ENCODE measurements at regions of chr2 and their contacts with region 1.

Region 1: GRCh38 chr2:131492418-131493198 is 411 bp upstream of the MZT2A start:
- DNase-seq: peak; percentile 95
- H3K4me3 Mint-ChIP-seq: peak overlapping the region; percentile 97
- H3K27ac Mint-ChIP-seq: peak overlapping the region; percentile 96
- H3K4me1 Mint-ChIP-seq: peaks cover 57% of the 10 kb centered on the region
- H3K27me3 Mint-ChIP-seq: no peaks in the 10 kb centered on the region

Region 2: DNA sequence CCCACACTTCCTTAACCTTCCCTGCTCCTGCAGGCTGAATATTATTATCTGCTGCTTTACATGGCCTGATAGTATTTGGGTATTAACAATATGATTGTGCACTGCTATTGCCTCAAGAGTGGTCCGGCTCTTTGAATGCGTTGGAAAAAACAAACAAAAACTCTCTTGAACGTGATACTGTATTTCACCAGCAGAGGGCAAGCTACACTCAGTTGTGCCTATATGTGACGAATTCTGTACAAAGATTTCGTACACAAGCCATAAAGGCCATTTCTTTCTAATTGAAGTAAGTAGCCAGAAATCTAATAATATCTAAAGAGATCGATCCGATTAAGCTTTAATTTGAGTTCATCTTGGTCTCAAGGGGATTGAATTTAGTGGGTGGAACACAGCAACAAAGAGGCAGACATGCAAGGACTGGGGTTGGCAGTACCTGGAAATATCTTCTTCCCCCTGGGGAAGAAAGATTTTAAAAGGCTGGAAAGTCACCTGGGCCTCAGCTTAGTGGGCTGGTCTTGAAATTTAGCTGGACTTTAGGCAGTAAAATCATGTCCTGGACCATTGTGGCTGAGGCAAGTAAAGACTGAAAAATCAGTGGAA is 79.4 kb before region 1 on chr2:
- CTCF ChIA-PET with region 1: interaction called, 15 read pairs
- POLR2A ChIA-PET with region 1: interaction called, 3 read pairs
- DNase-seq: no peak
- H3K4me3 Mint-ChIP-seq: no peak overlapping the region
- H3K27ac Mint-ChIP-seq: no peak overlapping the region
- H3K4me1 Mint-ChIP-seq: peaks cover 5% of the 10 kb centered on the region
- H3K27me3 Mint-ChIP-seq: peaks cover 51% of the 10 kb centered on the region

Region 3: DNA sequence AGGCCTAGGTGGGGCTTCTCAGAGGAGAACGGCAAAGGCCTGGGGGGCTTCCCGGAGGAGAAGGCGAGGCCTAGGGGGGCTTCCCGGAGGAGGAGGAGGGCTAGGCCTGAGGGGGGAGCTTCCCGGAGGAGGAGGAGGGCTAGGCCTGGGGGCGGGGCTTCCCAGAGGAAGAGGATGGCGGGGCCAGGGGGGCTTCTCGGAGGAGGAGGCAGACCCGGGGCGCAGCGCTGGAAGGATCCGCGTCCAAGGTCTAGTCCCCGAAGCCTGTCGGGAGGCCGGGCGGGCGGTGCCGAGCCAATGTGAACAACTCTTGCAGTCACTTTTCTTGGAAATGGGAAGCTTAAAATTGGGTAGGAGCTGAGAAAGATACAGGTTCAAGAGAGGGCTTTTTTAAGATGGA is 46.7 kb before region 1 on chr2:
- CTCF ChIA-PET with region 1: no interaction called
- POLR2A ChIA-PET with region 1: no interaction called
- DNase-seq: no peak
- H3K4me3 Mint-ChIP-seq: no peak overlapping the region
- H3K27ac Mint-ChIP-seq: no peak overlapping the region
- H3K4me1 Mint-ChIP-seq: peaks cover 3% of the 10 kb centered on the region
- H3K27me3 Mint-ChIP-seq: peaks cover 16% of the 10 kb centered on the region

Region 4: DNA sequence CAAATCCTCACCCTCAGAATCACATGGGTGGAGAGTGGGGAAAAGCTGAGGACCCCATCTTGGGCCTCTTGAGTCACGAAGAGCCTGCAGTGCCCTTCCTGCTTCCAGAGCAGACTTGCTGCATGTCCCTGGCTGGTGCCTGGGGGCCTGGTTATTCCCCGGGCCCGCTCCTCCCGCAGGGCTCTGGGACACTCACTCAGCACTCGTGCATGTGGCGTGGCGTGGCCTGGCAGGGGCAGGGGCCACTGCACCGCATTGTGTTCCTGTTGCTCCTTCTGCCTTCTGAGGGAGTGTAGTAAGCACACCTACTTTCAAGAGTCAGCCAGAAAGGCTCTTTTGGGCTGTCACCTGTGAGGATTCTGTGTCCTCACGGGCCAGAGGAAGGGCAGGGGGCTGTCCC is 17.0 kb after region 1 on chr2:
- CTCF ChIA-PET with region 1: interaction called, 36 read pairs
- POLR2A ChIA-PET with region 1: interaction called, 4 read pairs
- DNase-seq: no peak
- H3K4me3 Mint-ChIP-seq: no peak overlapping the region
- H3K27ac Mint-ChIP-seq: no peak overlapping the region
- H3K4me1 Mint-ChIP-seq: peaks cover 11% of the 10 kb centered on the region
- H3K27me3 Mint-ChIP-seq: no peaks in the 10 kb centered on the region

Region 5: DNA sequence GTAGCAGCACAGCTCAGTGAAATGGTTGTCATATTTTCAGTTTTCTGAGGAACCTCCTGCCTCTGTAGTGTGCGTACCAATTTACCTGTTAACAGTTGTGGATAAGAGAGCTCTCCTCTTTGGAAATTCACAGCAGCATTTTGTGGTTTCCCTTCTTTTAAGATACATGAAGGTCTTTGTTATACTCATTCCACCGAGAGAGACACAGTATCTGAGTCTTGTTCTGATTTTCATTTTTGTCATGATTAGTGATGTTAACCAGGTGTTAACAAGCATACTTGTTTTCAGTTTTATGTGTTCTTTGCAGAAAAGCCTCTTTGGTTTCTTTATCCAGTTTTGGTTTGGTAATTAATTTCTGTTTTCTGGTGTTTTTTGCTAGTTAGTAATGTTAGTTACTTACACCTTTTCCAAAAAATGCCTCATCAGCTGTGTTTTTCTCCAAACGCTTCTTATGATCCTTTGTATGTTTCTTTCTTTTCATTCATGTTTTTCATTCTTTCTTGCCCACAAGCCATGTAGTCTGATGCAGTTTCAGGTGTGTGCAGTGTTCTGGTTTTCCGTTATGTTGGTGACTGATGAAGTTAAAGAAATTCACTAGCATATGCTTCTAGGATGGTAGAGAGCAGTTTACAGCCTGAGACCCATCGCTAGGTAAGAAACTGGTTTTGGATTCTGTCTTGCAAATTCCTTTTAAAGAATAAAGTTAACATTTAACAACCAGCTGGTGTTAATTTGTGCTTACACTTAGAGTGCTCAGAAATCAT is 65.1 kb after region 1 on chr2:
- CTCF ChIA-PET with region 1: no interaction called
- POLR2A ChIA-PET with region 1: no interaction called
- DNase-seq: no peak
- H3K4me3 Mint-ChIP-seq: no peak overlapping the region
- H3K27ac Mint-ChIP-seq: no peak overlapping the region
- H3K4me1 Mint-ChIP-seq: no peaks in the 10 kb centered on the region
- H3K27me3 Mint-ChIP-seq: peaks cover 44% of the 10 kb centered on the region

Measured in activated CD4-positive, alpha-beta memory T cell treated with anti-CD3 and anti-CD28 coated beads, Interleukin-2, amount 10 ng/mL, durations not matched to agents 7 days and 5 days (primary cell).